Activated B cell treated with CpG ODN at 0.5 μM for 24 hours (primary cell): ENCODE measurements at regions of chr11 and their contacts with region 1.

Region 1: DNA sequence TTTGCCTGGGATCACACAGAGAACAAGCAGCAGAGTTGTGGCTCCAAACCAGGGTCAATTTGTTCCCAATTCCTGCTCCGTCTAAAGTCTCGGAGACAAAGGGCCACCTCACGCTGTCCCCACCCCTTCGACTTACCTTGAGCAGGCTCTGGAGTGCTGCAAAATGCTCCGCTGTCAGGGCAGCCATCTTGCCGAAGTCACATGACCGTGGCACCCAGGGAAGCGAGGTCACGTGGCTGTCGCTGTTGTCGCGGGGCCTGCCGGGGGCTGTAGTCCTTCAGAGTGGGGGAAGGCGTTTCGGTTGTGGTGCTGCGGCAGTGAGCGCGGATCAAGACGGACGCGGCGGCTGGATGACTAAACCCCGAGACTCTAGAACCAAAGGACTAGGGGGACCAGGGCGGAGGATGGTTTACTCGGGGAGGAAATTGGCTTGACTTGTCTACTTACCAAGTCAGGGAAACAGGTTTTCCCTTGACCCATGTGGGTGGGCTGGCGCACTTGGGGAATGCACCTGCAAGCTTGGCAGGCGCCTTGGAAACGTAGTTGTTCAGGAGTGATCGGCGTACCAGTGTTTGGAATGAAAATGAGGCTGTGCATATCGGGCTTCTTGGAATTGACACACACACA is at the start of gene COMMD9:
- DNase-seq: peak; percentile 85
- ATAC-seq: peak; percentile 96
- H3K4me3 Mint-ChIP-seq: peak within 1 kb of the TSS; percentile 95
- H3K27ac Mint-ChIP-seq: peak within 1 kb of the TSS; percentile 89
- H3K4me1 Mint-ChIP-seq: peaks cover 35% of the 10 kb centered on the region
- H3K27me3 Mint-ChIP-seq: no peaks in the 10 kb centered on the region
- CTCF ChIP-seq: no peak
- total RNA-seq, gene COMMD9: 54.4 and 61.0 TPM in 2 replicates

Region 2: GRCh38 chr11:36354221-36355003 is 65.1 kb after region 1 on chr11:
- CTCF ChIA-PET with region 1: no interaction called
- POLR2A ChIA-PET with region 1: no interaction called
- intact Hi-C with region 1: loop called (anchors 2 kb)
- DNase-seq: no peak
- ATAC-seq: peak; percentile 38
- H3K4me3 Mint-ChIP-seq: peak overlapping the region; percentile 17
- H3K27ac Mint-ChIP-seq: no peak overlapping the region
- H3K4me1 Mint-ChIP-seq: peaks cover 45% of the 10 kb centered on the region
- H3K27me3 Mint-ChIP-seq: no peaks in the 10 kb centered on the region
- CTCF ChIP-seq: no peak

Region 3: GRCh38 chr11:36492724-36493304 is 203.5 kb after region 1 on chr11:
- CTCF ChIA-PET with region 1: interaction called, 134 read pairs
- POLR2A ChIA-PET with region 1: interaction called, 10 read pairs
- intact Hi-C with region 1: loop called (anchors 1 kb)
- DNase-seq: no peak
- ATAC-seq: peak; percentile 65
- H3K4me3 Mint-ChIP-seq: no peak overlapping the region
- H3K27ac Mint-ChIP-seq: no peak overlapping the region
- H3K4me1 Mint-ChIP-seq: peaks cover 15% of the 10 kb centered on the region
- H3K27me3 Mint-ChIP-seq: no peaks in the 10 kb centered on the region
- CTCF ChIP-seq: no peak

Region 4: GRCh38 chr11:36672813-36673450 is 383.6 kb after region 1 on chr11:
- CTCF ChIA-PET with region 1: interaction called, 14 read pairs
- POLR2A ChIA-PET with region 1: no interaction called
- intact Hi-C with region 1: loop called (anchors 1 kb)
- DNase-seq: no peak
- ATAC-seq: no peak
- H3K4me3 Mint-ChIP-seq: no peak overlapping the region
- H3K27ac Mint-ChIP-seq: no peak overlapping the region
- H3K4me1 Mint-ChIP-seq: no peaks in the 10 kb centered on the region
- H3K27me3 Mint-ChIP-seq: peaks cover 5% of the 10 kb centered on the region
- CTCF ChIP-seq: peak; percentile 92